IMR-90 (cell line): ENCODE measurements at regions of chr2 and their contacts with region 1.

Region 1: DNA sequence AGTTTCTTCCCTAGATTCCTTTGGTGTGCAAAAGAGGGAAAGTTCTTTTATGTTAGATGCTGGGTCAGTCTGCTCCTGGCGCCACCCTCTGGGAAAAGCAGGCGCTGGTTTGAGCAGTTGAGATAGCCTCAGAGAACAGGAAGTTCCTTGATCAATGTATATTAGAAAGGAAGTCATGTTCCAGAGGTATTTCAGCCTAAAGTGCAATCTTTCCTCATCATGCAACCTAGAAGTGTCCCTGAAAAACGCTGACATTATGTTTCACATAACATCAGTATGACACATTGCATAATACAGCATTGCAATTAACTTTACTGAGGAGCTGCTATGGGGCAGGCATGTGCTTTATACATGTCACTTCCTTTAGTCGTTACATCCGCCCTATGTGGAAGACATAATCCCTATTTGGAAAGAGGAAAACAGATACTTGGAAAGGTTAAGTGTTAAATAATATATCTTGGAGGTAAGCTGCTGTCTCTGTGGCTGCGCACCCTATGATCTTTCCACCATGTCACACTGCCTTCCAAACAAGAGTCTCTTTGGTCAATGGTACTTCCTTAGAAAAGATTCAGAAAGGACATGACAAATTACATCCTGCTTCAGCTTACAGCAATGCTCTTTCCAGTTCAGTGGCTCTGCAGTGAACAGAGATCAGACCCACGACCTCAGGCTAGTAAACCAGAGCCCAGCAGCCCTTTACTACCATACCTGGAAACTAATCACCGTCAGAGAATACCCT is 369.7 kb downstream of the RAD51AP2 start:
- DNase-seq: no peak
- ATAC-seq: no peak
- H3K4me3 ChIP-seq: no peak overlapping the region
- H3K27ac ChIP-seq: no peak overlapping the region
- H3K4me1 ChIP-seq: no peaks in the 10 kb centered on the region
- H3K27me3 ChIP-seq: no peaks in the 10 kb centered on the region
- CTCF ChIP-seq: no peak
- POLR2A ChIP-seq: no peak
- RAD21 ChIP-seq: no peak

Region 2: GRCh38 chr2:16773080-16773713 is 375.4 kb before region 1 on chr2:
- CTCF ChIA-PET with region 1: no interaction called
- POLR2A ChIA-PET with region 1: no interaction called
- dilution Hi-C with region 1: no loop called
- in situ Hi-C with region 1: no loop called
- intact Hi-C with region 1: loop called (anchors 10 kb)
- DNase-seq: peak; percentile 42
- ATAC-seq: peak; percentile 87
- H3K4me3 ChIP-seq: no peak overlapping the region
- H3K27ac ChIP-seq: no peak overlapping the region
- H3K4me1 ChIP-seq: no peaks in the 10 kb centered on the region
- H3K27me3 ChIP-seq: peaks cover 1% of the 10 kb centered on the region; the same call in 1 of the 2 replicates
- CTCF ChIP-seq: peak; percentile 56
- POLR2A ChIP-seq: no peak
- RAD21 ChIP-seq: peak; percentile 70

Region 3: GRCh38 chr2:16852643-16853042 is 295.9 kb before region 1 on chr2:
- CTCF ChIA-PET with region 1: no interaction called
- POLR2A ChIA-PET with region 1: no interaction called
- dilution Hi-C with region 1: no loop called
- in situ Hi-C with region 1: no loop called
- intact Hi-C with region 1: no loop called
- DNase-seq: no peak
- ATAC-seq: no peak
- H3K4me3 ChIP-seq: no peak overlapping the region
- H3K27ac ChIP-seq: no peak overlapping the region
- H3K4me1 ChIP-seq: no peaks in the 10 kb centered on the region
- H3K27me3 ChIP-seq: no peaks in the 10 kb centered on the region
- CTCF ChIP-seq: no peak
- POLR2A ChIP-seq: no peak
- RAD21 ChIP-seq: no peak

Region 4: DNA sequence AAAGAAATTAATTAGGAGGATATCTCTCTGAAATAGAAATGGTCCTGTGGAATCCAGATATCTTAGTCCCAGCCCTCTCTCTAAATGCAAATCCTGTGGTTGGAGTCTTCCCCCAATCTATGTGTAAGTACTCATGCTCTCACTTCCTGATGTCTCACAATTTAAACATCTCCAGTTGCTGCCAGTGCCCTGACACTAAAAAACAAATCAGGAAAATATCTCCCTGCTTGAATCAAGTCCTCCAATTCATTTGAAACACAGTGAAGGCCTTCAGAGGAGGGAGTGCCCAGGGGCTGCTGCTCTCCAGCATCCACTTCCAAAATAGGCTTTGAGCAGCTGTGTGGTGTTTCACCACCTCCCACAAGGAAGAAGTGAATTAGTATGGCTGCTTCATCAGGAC is 44.1 kb before region 1 on chr2:
- CTCF ChIA-PET with region 1: no interaction called
- POLR2A ChIA-PET with region 1: no interaction called
- dilution Hi-C with region 1: no loop called
- in situ Hi-C with region 1: no loop called
- intact Hi-C with region 1: no loop called
- DNase-seq: peak; percentile 60
- ATAC-seq: no peak
- H3K4me3 ChIP-seq: no peak overlapping the region
- H3K27ac ChIP-seq: no peak overlapping the region
- H3K4me1 ChIP-seq: no peaks in the 10 kb centered on the region
- H3K27me3 ChIP-seq: no peaks in the 10 kb centered on the region
- CTCF ChIP-seq: no peak
- POLR2A ChIP-seq: no peak
- RAD21 ChIP-seq: no peak

Region 5: GRCh38 chr2:17232776-17233556 is 84.4 kb after region 1 on chr2:
- CTCF ChIA-PET with region 1: no interaction called
- POLR2A ChIA-PET with region 1: no interaction called
- dilution Hi-C with region 1: no loop called
- in situ Hi-C with region 1: no loop called
- intact Hi-C with region 1: no loop called
- DNase-seq: no peak
- ATAC-seq: no peak
- H3K4me3 ChIP-seq: no peak overlapping the region
- H3K27ac ChIP-seq: no peak overlapping the region
- H3K4me1 ChIP-seq: no peaks in the 10 kb centered on the region
- H3K27me3 ChIP-seq: no peaks in the 10 kb centered on the region
- CTCF ChIP-seq: no peak
- POLR2A ChIP-seq: no peak
- RAD21 ChIP-seq: no peak